ENCODE measurements at regions of chr20 and their contacts with region 1.

Region 1: DNA sequence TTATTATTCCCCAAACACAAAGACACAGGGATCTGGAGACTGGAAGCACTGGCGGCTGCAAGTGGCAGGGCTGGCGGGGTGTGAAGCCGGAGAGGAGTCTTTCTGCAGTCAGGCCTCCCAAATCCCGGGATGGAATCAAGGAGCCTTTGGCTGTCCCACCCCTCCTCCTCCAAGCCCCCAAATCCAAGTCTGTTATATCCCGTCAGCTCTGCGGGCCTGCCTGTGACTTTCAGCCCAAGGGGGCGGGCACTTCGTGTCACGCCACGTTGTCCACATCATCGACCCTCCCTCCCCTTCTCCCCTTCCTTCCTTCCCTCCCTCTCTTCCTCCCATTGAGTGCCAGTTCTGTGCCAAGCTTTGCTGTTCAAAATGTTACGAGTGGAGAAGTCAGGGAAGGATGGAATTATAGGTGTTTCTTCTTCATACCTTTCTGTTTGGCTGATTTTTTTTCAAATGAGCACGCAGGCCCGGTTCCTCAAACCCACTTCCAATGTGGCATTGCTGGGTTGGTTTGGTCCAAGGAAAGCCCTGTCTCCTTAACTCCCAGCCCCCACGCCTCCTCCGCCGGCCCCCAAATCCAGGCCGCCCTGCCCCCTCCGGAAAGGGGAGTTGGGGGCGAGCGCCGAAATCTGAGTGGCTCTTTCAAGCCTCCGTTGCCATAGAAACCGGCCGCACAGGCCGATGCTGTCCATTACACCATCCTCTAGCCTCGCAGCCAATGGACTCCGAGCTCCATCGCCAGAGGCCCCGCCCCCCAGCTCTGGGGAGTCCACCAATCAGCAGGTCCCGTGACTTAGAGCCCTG is 12.7 kb downstream of the ZCCHC3 start:
- DNase-seq: peak; percentile 99
- H3K4me3 ChIP-seq: peak overlapping the region; percentile 60
- H3K27ac ChIP-seq: peak overlapping the region; percentile 97
- H3K27me3 ChIP-seq: no peaks in the 10 kb centered on the region
- CTCF ChIP-seq: no peak

Region 2: DNA sequence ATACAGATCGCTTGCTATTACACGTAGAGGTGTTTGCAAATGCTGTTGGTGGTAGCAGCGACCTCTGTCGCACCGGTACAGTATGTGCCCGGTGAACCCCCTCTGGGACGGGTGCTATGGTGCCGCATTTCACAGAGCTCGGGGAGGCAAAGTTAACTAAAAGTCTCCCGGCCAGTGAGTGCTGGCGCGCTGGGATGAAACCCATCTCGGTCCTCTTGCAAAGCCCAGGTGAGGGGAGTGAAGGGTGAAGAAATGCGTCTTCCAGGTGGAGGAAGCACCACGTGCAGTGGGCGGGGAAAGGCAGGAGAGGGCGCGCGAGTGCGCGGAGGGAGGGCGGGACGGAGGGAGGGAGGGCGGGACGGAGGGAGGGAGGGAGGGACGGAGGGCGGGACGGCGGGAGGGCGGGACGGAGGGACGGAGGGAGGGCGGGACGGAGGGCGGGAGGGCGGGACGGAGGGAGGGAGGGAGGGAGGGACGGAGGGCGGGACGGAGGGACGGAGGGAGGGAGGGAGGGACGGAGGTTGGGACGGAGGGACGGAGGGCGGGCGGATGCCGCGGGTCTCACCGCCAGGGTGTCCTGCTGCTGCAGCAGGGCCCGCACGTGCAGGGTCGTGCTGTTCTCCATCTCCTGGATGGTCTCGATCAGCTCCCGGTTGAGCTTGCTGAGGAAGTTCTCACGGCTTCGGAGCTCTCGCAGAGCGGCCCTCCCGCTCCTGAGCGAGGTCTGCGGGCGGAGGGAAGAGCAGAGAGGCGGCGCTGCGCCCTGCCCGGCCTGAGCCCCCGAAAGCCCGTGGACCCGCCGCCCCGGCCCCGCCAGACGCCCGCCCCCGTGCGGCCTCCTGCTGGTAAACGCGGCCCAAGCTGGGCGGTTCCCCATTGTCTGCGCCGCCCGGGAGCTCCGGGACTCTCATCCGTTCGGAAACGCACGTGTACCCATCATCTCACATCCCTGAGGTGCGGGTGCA is 31.2 kb before region 1 on chr20:
- CTCF ChIA-PET with region 1: no interaction called
- POLR2A ChIA-PET with region 1: no interaction called
- DNase-seq: no peak
- H3K4me3 ChIP-seq: no peak overlapping the region
- H3K27ac ChIP-seq: no peak overlapping the region
- H3K27me3 ChIP-seq: no peaks in the 10 kb centered on the region
- CTCF ChIP-seq: no peak

Region 3: DNA sequence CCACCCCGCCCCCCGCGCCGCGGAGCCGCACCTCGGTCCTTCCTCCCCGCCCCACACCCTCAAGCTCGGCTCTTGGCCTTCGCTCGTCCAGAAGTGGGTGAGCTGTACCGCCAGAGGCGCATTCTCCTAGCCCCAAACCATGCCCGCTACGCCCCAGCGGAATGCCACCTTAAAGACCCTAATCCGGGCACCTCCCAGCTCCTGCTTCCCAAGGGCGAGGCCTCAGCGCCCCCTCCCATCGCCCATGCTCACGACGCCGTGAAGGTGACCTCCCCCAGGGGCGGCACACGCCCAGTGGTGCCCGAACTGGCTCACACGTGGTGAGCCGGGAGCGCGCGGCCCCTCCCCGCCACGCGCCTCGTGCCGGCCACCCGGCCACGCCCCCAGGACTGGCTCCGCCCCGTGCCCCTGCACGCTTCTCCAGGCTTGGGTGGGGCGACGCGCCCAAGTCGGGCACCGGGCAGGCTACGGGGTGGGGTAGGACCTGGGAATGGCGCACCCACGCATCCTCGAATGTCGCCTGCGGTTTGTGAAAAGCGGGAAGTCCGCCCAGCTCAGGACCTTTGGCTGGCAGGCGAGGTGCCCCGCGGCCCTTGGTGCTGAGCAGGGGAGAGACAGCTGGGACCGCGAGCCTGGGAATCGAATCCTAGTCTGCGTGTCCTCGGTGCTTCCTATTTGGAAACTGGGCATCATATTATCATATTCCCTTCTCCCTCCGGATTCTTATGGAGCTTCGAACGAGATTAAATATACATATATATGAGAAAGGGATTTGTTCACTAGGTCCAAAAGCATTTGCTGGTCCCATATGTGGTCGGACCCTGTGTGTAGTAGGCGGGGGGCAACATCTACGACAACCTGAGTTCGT is 14.4 kb after region 1 on chr20:
- CTCF ChIA-PET with region 1: interaction called, 8 read pairs
- POLR2A ChIA-PET with region 1: interaction called, 17 read pairs
- DNase-seq: no peak
- H3K4me3 ChIP-seq: peak overlapping the region; percentile 80
- H3K27ac ChIP-seq: peak overlapping the region; percentile 86
- H3K27me3 ChIP-seq: no peaks in the 10 kb centered on the region
- CTCF ChIP-seq: peak; percentile 56

Region 4: GRCh38 chr20:347640-348484 is 37.8 kb after region 1 on chr20:
- CTCF ChIA-PET with region 1: no interaction called
- POLR2A ChIA-PET with region 1: interaction called, 10 read pairs
- DNase-seq: peak; percentile 80
- H3K4me3 ChIP-seq: peak overlapping the region; percentile 87
- H3K27ac ChIP-seq: peak overlapping the region; percentile 92
- H3K27me3 ChIP-seq: no peaks in the 10 kb centered on the region
- CTCF ChIP-seq: no peak